GM12878 (cell line): ENCODE measurements at regions of chr7 and their contacts with region 1.

Region 1: DNA sequence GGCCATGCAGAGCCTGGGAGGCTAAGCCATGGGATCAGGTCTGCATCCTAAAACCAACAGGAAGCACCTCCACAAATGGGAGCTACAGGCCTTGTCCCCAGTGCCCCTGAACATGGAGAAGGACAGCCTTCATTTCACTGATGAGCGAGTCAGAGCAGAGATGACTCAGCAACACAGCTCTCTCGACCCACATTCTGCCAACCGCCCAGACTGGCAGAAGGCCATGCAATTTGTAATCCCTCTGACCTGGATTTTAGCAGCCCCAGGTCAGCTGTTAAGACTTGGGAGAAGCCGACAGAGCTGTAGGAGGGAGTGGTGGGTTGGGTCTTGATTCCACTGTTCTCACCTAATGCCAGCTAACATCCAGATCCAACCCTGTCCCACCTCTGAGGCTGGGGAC is 25.5 kb downstream of the VOPP1 start:
- DNase-seq: no peak
- ATAC-seq: peak; percentile 64
- H3K4me3 ChIP-seq: peak overlapping the region; percentile 22; the same call in 1 of the 2 replicates
- H3K27ac ChIP-seq: peak overlapping the region; percentile 82
- H3K4me1 ChIP-seq: peaks cover 72% of the 10 kb centered on the region
- H3K27me3 ChIP-seq: no peaks in the 10 kb centered on the region
- CTCF ChIP-seq: no peak
- EP300 ChIP-seq: no peak
- POLR2A ChIP-seq: no peak
- RAD21 ChIP-seq: no peak

Region 2: GRCh38 chr7:55557666-55558188 is 10.9 kb after region 1 on chr7:
- CTCF ChIA-PET with region 1: interaction called, 6 read pairs
- POLR2A ChIA-PET with region 1: interaction called, 22 read pairs
- RAD21 ChIA-PET with region 1: interaction called, 18 read pairs
- SMC1A ChIA-PET with region 1: interaction called, 47 read pairs
- in situ Hi-C with region 1: no loop called
- intact Hi-C with region 1: no loop called
- DNase-seq: peak; percentile 85
- ATAC-seq: peak; percentile 87
- H3K4me3 ChIP-seq: peak overlapping the region; percentile 70
- H3K27ac ChIP-seq: peak overlapping the region; percentile 57
- H3K4me1 ChIP-seq: peaks cover 82% of the 10 kb centered on the region
- H3K27me3 ChIP-seq: no peaks in the 10 kb centered on the region
- CTCF ChIP-seq: peak in 2 of 3 experiments; percentile 7 to 12; a peak in 1 of 6 replicates
- EP300 ChIP-seq: peak; percentile 32 to 54; a peak in 3 of 4 replicates
- POLR2A ChIP-seq: peak; percentile 57
- RAD21 ChIP-seq: no peak

Region 3: GRCh38 chr7:55567571-55567970 is 20.7 kb after region 1 on chr7:
- CTCF ChIA-PET with region 1: interaction called, 35 read pairs
- POLR2A ChIA-PET with region 1: interaction called, 32 read pairs
- RAD21 ChIA-PET with region 1: interaction called, 87 read pairs
- SMC1A ChIA-PET with region 1: interaction called, 263 read pairs
- in situ Hi-C with region 1: no loop called
- intact Hi-C with region 1: no loop called
- DNase-seq: no peak
- ATAC-seq: peak; percentile 16
- H3K4me3 ChIP-seq: peak overlapping the region; percentile 60
- H3K27ac ChIP-seq: peak overlapping the region; percentile 72
- H3K4me1 ChIP-seq: peaks cover 44% of the 10 kb centered on the region
- H3K27me3 ChIP-seq: no peaks in the 10 kb centered on the region
- CTCF ChIP-seq: no peak
- EP300 ChIP-seq: no peak
- POLR2A ChIP-seq: no peak
- RAD21 ChIP-seq: no peak